ENCODE measurements at regions of chr12 and their contacts with region 1.

Region 1: GRCh38 chr12:118135788-118136558 is at the start of gene PEBP1:
- DNase-seq: peak; percentile 88
- ATAC-seq: peak; percentile 93
- H3K4me3 ChIP-seq: peak within 1 kb of the TSS; percentile 91 to 97 (median 92)
- H3K27ac ChIP-seq: peak within 1 kb of the TSS; percentile 96
- H3K4me1 ChIP-seq: peaks cover 78% of the 10 kb centered on the region
- H3K27me3 ChIP-seq: no peaks in the 10 kb centered on the region
- CTCF ChIP-seq: peak; percentile 24; the same call in 1 of the 2 replicates
- EP300 ChIP-seq: peak; percentile 23 to 54; a peak in 2 of 4 replicates
- POLR2A ChIP-seq: peak; percentile 92 to 98
- RAD21 ChIP-seq: peak; percentile 63
- total RNA-seq, gene PEBP1: 1,505 and 1,984 TPM in 2 replicates

Region 2: GRCh38 chr12:118052324-118053070 is 83.5 kb before region 1 on chr12:
- CTCF ChIA-PET with region 1: no interaction called
- POLR2A ChIA-PET with region 1: interaction called, 6 read pairs
- in situ Hi-C with region 1: no loop called
- intact Hi-C with region 1: loop called (anchors 1 kb)
- DNase-seq: peak; percentile 99
- ATAC-seq: peak; percentile 91
- H3K4me3 ChIP-seq: peak overlapping the region in 2 of 3 experiments; percentile 7 to 45; a peak in 2 of 6 replicates
- H3K27ac ChIP-seq: peak overlapping the region; percentile 91
- H3K4me1 ChIP-seq: peaks cover 65% of the 10 kb centered on the region
- H3K27me3 ChIP-seq: no peaks in the 10 kb centered on the region
- CTCF ChIP-seq: peak; percentile 46
- EP300 ChIP-seq: peak; percentile 65 to 90; a peak in 3 of 4 replicates
- POLR2A ChIP-seq: peak; percentile 42 to 73; a peak in 3 of 4 replicates
- RAD21 ChIP-seq: no peak; the same call in 1 of the 2 replicates

Region 3: DNA sequence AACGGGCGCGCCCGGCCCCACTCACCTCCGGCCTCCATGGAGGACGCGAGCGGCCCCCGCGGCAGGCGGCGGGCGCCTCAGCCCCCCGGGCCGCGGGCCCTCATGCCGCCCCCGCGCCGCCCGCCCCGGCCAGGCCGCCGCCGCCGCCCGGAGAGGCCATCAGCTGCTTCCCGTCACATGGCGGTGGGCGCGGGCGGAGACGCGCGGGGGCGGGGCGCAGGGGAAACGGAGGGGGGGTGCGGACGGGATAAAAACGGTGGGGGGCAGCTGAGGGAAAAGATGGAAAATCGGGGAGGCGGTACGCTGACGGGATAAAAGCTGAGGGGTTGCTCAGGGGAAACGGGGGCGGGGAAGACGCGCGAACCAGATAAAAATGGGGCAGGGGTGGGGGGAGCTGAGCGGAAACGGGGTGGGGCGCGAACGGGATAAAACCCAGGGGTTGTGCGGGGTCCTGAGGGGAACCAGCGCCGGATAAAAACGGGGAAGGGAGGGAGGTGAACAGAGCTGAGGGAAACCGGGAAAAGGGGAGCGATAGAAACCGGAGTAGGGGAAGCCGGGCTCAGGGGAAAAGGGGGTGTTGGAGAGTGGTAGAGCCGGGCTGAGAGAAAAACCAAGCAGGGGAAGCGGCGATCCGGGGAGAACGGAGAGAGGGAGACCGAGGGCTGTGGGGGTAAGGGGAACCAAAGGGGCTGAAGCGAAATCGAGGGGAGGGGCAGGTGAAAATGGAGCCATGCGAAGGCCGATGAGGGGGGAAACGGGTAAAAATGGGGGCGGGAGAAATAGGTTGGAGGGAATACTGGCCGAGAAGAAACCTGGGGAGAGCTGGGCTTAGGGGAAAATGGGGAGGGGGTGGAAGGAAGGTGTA is 74.7 kb before region 1 on chr12 and contains the start of gene WSB2:
- CTCF ChIA-PET with region 1: no interaction called
- POLR2A ChIA-PET with region 1: interaction called, 11 read pairs
- in situ Hi-C with region 1: no loop called
- intact Hi-C with region 1: no loop called
- DNase-seq: no peak
- ATAC-seq: peak; percentile 23
- H3K4me3 ChIP-seq: peak within 1 kb of the TSS; percentile 69 to 92 (median 86)
- H3K27ac ChIP-seq: peak within 1 kb of the TSS; percentile 81
- H3K4me1 ChIP-seq: peaks cover 62% of the 10 kb centered on the region
- H3K27me3 ChIP-seq: no peaks in the 10 kb centered on the region; a peak in 1 of 5 replicates
- CTCF ChIP-seq: no peak
- EP300 ChIP-seq: no peak
- POLR2A ChIP-seq: no peak
- RAD21 ChIP-seq: no peak
- total RNA-seq, gene WSB2: 31.0 and 39.5 TPM in 2 replicates

Region 4: GRCh38 chr12:118103604-118104382 is 32.2 kb before region 1 on chr12 and contains the start of gene VSIG10:
- CTCF ChIA-PET with region 1: no interaction called
- POLR2A ChIA-PET with region 1: interaction called, 10 read pairs
- in situ Hi-C with region 1: no loop called
- intact Hi-C with region 1: no loop called
- DNase-seq: peak; percentile 71
- ATAC-seq: peak; percentile 91
- H3K4me3 ChIP-seq: peak within 1 kb of the TSS; percentile 82 to 91 (median 85)
- H3K27ac ChIP-seq: peak within 1 kb of the TSS; percentile 79
- H3K4me1 ChIP-seq: peaks cover 41% of the 10 kb centered on the region
- H3K27me3 ChIP-seq: no peaks in the 10 kb centered on the region
- CTCF ChIP-seq: no peak; the same call in 1 of the 2 replicates
- EP300 ChIP-seq: no peak; a peak in 1 of 4 replicates
- POLR2A ChIP-seq: peak; percentile 46 to 73
- RAD21 ChIP-seq: peak; percentile 46; the same call in 1 of the 2 replicates
- total RNA-seq, gene VSIG10: 35.6 and 42.5 TPM in 2 replicates

Region 5: DNA sequence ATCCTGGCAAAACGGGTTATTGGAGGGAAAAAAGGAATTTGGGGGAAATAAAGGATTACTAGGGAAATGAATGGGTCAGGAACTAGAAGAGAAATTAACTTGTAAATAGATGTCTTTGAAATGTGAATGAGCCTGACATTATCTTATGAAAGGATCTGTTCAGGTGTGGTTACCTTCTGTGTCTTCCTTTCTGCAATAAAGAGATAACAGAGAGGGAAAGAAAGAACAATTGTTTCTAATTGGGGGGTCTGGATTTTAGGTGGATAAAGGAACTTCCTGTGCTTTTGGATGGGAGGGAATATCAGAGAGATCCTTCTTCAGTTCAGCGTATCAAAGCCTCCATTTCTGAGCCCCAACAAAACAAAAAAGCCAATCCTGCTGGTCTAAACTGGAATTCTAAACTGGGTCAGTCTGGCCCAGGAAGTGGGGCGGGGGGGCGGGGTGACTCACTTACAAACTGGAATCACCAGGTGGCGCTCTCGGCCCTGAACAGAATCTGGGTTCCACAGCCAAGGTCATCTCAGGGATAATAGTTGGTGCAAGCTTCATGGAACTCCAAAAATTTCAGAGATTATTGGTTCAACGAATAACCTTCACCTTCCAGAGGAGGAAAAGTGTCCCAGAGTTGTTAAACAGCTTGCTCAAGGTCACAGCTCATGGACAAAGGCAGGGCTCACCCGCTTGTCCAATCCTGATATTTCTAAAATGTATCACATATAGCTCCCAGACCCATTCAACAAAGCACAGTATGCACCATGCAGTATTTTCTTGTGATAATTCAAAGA is 15.2 kb before region 1 on chr12:
- CTCF ChIA-PET with region 1: interaction called, 3 read pairs
- POLR2A ChIA-PET with region 1: interaction called, 126 read pairs
- in situ Hi-C with region 1: no loop called
- intact Hi-C with region 1: loop called (anchors 1 kb)
- DNase-seq: peak; percentile 91
- ATAC-seq: peak; percentile 80
- H3K4me3 ChIP-seq: no peak overlapping the region; a peak in 1 of 6 replicates
- H3K27ac ChIP-seq: peak overlapping the region; percentile 90
- H3K4me1 ChIP-seq: peaks cover 67% of the 10 kb centered on the region
- H3K27me3 ChIP-seq: no peaks in the 10 kb centered on the region
- CTCF ChIP-seq: peak; percentile 73
- EP300 ChIP-seq: peak in 1 of 2 experiments; percentile 66; a peak in 2 of 4 replicates
- POLR2A ChIP-seq: no peak
- RAD21 ChIP-seq: peak; percentile 70

Region 6: GRCh38 chr12:118271790-118272417 is 135.9 kb after region 1 on chr12:
- CTCF ChIA-PET with region 1: no interaction called
- POLR2A ChIA-PET with region 1: no interaction called
- in situ Hi-C with region 1: no loop called
- intact Hi-C with region 1: no loop called
- DNase-seq: no peak
- ATAC-seq: no peak
- H3K4me3 ChIP-seq: no peak overlapping the region
- H3K27ac ChIP-seq: no peak overlapping the region
- H3K4me1 ChIP-seq: no peaks in the 10 kb centered on the region
- H3K27me3 ChIP-seq: no peaks in the 10 kb centered on the region
- CTCF ChIP-seq: no peak
- EP300 ChIP-seq: no peak
- POLR2A ChIP-seq: no peak
- RAD21 ChIP-seq: no peak

Region 7: GRCh38 chr12:118372541-118373495 is 236.8 kb after region 1 on chr12 and contains the start of gene TAOK3:
- CTCF ChIA-PET with region 1: no interaction called
- POLR2A ChIA-PET with region 1: interaction called, 21 read pairs
- in situ Hi-C with region 1: no loop called
- intact Hi-C with region 1: loop called (anchors 5 kb)
- DNase-seq: peak; percentile 98
- ATAC-seq: peak; percentile 86
- H3K4me3 ChIP-seq: peak within 1 kb of the TSS; percentile 91 to 95 (median 94)
- H3K27ac ChIP-seq: peak within 1 kb of the TSS; percentile 97
- H3K4me1 ChIP-seq: peaks cover 35% of the 10 kb centered on the region
- H3K27me3 ChIP-seq: no peaks in the 10 kb centered on the region; a peak in 1 of 5 replicates
- CTCF ChIP-seq: no peak
- EP300 ChIP-seq: peak in 1 of 2 experiments; percentile 36; a peak in 2 of 4 replicates
- POLR2A ChIP-seq: peak; percentile 91 to 97
- RAD21 ChIP-seq: peak; percentile 38; the same call in 1 of the 2 replicates
- total RNA-seq, gene TAOK3: 12.3 and 16.5 TPM in 2 replicates

Region 8: GRCh38 chr12:118549510-118549980 is 413.6 kb after region 1 on chr12:
- CTCF ChIA-PET with region 1: no interaction called
- POLR2A ChIA-PET with region 1: no interaction called
- in situ Hi-C with region 1: no loop called
- intact Hi-C with region 1: no loop called
- DNase-seq: no peak
- ATAC-seq: no peak
- H3K4me3 ChIP-seq: no peak overlapping the region
- H3K27ac ChIP-seq: no peak overlapping the region
- H3K4me1 ChIP-seq: no peaks in the 10 kb centered on the region
- H3K27me3 ChIP-seq: no peaks in the 10 kb centered on the region
- CTCF ChIP-seq: no peak
- EP300 ChIP-seq: no peak
- POLR2A ChIP-seq: no peak
- RAD21 ChIP-seq: no peak